ENCODE measurements at regions of chr20 and their contacts with region 1.

Region 1: GRCh38 chr20:49347156-49347555 is 69.3 kb upstream of the ZNFX1 start:
- DNase-seq: no peak
- ATAC-seq: no peak
- H3K4me3 Mint-ChIP-seq: no peak overlapping the region
- H3K27ac Mint-ChIP-seq: no peak overlapping the region
- H3K4me1 Mint-ChIP-seq: peaks cover 2% of the 10 kb centered on the region
- H3K27me3 Mint-ChIP-seq: peaks cover 22% of the 10 kb centered on the region

Region 2: DNA sequence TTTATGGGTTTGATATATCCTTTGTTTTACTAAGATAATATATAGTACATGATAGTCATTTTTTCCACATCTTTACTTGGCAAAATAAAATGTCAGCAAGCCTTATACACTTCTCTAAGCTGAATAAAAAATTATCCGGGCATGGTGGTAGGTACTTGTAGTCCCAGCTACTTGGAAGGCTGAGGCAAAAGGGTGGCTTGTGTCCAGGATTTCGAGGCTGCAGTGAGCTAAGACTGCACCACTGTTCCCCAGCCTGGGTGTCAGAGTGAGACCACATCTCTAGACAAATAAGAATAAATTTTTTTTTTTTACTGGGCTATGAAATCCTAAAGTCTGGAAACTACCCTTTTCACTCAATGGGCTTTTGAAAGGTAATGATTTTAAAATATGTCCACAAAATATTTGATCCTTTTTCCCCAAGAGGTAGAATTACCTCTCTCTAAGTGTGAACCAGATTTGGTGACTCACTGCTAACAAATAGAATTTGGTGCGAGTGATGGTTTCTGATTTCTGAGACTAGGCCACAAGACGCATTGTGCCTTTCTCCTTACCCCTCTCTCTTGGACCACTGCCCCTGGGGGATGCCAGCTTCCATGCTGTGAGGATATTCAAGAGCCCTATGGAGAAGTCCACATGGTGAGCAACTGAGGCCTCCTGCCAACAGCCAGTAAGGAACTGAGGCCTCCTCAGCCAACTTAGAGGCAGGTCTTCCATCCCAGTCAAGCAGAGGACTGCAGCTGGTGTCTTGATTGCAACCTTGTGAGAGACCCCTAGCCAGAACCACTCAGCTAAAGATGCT is 14.9 kb after region 1 on chr20:
- POLR2A ChIA-PET with region 1: no interaction called
- DNase-seq: no peak
- ATAC-seq: no peak
- H3K4me3 Mint-ChIP-seq: no peak overlapping the region
- H3K27ac Mint-ChIP-seq: no peak overlapping the region
- H3K4me1 Mint-ChIP-seq: no peaks in the 10 kb centered on the region
- H3K27me3 Mint-ChIP-seq: peaks cover 19% of the 10 kb centered on the region

Region 3: DNA sequence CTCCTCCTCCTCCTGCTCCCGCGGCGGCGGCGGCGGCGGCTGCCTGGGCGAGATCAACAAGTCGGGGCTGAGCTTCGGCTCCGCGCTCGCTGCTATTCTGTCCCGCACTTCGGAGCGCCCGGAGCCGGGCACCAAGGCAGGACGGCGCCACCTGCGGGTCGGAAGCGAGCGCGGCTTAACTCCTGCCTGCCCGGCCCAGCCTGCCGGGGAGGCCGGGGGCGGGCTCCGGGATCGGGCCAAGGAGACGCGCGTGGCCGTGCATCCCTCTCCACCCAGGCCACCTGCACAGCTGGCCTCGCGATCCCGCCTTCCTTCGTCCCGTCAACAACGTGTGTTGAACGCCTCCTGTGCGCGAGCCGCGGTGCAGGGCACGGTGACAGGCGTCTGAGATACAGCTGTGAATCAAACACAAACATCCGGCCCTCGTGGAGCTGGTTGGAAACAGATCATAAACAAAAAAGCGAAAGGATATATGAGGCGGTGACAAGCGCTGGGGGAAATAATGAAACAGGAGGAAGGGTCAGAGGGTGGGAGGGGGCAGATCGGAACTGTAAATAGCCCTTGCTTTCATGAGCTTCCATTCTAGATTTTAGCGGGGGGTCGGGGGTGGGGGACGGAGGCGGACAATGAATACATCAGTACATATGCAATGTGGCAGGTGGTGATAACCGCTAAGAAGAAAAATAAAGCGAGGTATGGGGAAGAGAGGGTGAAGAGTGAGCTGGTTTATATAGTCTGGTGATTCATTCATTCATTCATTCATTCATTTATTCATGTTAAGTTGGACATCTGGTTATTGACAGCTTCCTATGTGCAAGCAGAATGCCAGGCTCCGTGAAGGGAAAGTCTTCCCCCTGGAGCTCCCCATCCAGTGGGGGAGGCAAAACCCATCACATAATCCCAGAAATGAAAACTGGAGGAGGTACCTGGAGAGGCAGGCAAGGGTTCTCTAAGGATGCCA is 137.3 kb after region 1 on chr20:
- POLR2A ChIA-PET with region 1: interaction called, 13 read pairs
- DNase-seq: peak; percentile 78
- ATAC-seq: peak; percentile 91
- H3K4me3 Mint-ChIP-seq: peak overlapping the region; percentile 83
- H3K27ac Mint-ChIP-seq: no peak overlapping the region
- H3K4me1 Mint-ChIP-seq: peaks cover 6% of the 10 kb centered on the region
- H3K27me3 Mint-ChIP-seq: peaks cover 56% of the 10 kb centered on the region

Measured in activated naive CD8-positive, alpha-beta T cell treated with anti-CD3 and anti-CD28 coated beads, Interleukin-2, amount 10 ng/mL, durations not matched to agents 7 days and 5 days (primary cell).